Transverse colon (tissue), 4 donors: ENCODE measurements at regions of chr5 and their contacts with region 1.

Region 1: DNA sequence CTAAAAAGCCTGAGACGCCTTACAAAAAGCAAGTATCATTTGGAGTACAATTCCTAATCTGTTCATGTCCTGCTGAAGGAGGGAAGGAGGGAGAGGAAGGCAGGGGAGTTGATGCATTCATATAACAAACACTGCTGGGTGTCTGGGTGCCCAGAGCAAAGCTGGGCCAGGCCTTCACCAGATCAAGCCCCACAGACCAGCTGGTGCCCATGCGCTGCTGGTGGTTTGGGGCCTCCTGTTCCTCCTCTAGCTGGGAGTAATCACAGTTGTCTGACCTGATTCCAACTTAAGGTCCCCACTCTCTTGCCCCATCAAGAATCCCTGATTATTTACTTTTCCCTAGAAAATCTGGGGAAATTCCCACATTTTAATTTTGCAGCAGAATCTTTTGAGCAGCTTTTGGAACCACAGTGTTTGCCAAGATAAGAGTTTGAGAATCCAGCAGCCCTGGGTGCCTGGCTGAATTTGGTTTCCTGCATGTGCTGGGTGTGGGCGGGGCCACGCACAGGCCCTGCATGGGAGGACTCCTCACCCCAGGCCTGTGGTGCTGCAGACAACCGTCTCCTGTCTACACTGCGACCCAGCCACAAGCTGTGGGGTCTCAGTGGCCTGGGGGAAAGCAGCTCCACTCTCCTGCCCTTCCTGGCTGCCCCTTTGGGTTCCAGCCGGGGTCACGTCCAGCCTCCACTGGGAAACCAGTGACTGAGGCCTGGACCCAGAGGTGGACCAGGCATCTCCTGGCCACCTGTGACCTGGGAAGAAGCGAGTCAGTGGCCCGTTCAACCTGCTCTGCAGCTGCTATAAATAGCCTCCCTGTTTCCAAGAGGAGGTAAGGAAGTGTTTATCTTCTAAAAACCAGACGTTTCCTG is 47.5 kb downstream of the NEURL1B start:
- DNase-seq: peak; percentile 61
- H3K4me3 ChIP-seq: no peak overlapping the region
- H3K27ac ChIP-seq: peak overlapping the region; percentile 70 to 83 (median 76)
- H3K4me1 ChIP-seq: peaks cover 21 to 31% (median 27%) of the 10 kb centered on the region in 4 donors
- H3K27me3 ChIP-seq: no peaks in the 10 kb centered on the region
- CTCF ChIP-seq: no peak
- EP300 ChIP-seq: no peak
- POLR2A ChIP-seq: no peak

Region 2: GRCh38 chr5:172646716-172647285 is 41.8 kb before region 1 on chr5:
- in situ Hi-C with region 1: no loop called
- intact Hi-C with region 1: loop called (anchors 5 kb)
- DNase-seq: peak; percentile 66
- H3K4me3 ChIP-seq: no peak overlapping the region
- H3K27ac ChIP-seq: peak overlapping the region; percentile 94 to 95 (median 94)
- H3K4me1 ChIP-seq: peaks cover 55 to 86% (median 72%) of the 10 kb centered on the region in 4 donors
- H3K27me3 ChIP-seq: no peaks in the 10 kb centered on the region
- CTCF ChIP-seq: peak; percentile 48 to 72 (median 55)
- EP300 ChIP-seq: no peak
- POLR2A ChIP-seq: no peak